MCF 10A (cell line): ENCODE measurements at regions of chr17 and their contacts with region 1.

Region 1: GRCh38 chr17:69141431-69142174 is at the start of gene ABCA6:
- DNase-seq: peak; percentile 70
- H3K4me3 Mint-ChIP-seq: peak within 1 kb of the TSS; percentile 77
- H3K27ac Mint-ChIP-seq: peak within 1 kb of the TSS; percentile 97
- H3K4me1 Mint-ChIP-seq: peaks cover 38% of the 10 kb centered on the region
- H3K27me3 Mint-ChIP-seq: no peaks in the 10 kb centered on the region
- CTCF ChIP-seq: no peak
- total RNA-seq, gene ABCA6: 34.5 TPM in 2 replicates

Region 2: GRCh38 chr17:69175812-69176795 is 34.5 kb after region 1 on chr17:
- CTCF ChIA-PET with region 1: no interaction called
- POLR2A ChIA-PET with region 1: interaction called, 11 read pairs
- intact Hi-C with region 1: loop called (anchors 1 kb)
- DNase-seq: peak; percentile 93
- H3K4me3 Mint-ChIP-seq: peak overlapping the region; percentile 62
- H3K27ac Mint-ChIP-seq: peak overlapping the region; percentile 94
- H3K4me1 Mint-ChIP-seq: peaks cover 48% of the 10 kb centered on the region
- H3K27me3 Mint-ChIP-seq: no peaks in the 10 kb centered on the region
- CTCF ChIP-seq: no peak

Region 3: GRCh38 chr17:69335058-69335457 is 193.5 kb after region 1 on chr17:
- CTCF ChIA-PET with region 1: no interaction called
- POLR2A ChIA-PET with region 1: no interaction called
- intact Hi-C with region 1: no loop called
- DNase-seq: peak; percentile 44
- H3K4me3 Mint-ChIP-seq: no peak overlapping the region
- H3K27ac Mint-ChIP-seq: no peak overlapping the region
- H3K4me1 Mint-ChIP-seq: no peaks in the 10 kb centered on the region
- H3K27me3 Mint-ChIP-seq: no peaks in the 10 kb centered on the region
- CTCF ChIP-seq: peak; percentile 48